Sigmoid colon (tissue), 7 donors: ENCODE measurements at regions of chr10 and their contacts with region 1.

Region 1: GRCh38 chr10:100562008-100562711 is 26.4 kb downstream of the HIF1AN start:
- DNase-seq: peak; percentile 67
- H3K4me3 ChIP-seq: peak overlapping the region in 1 of 4 donors; percentile 7
- H3K27ac ChIP-seq: no peak overlapping the region
- H3K4me1 ChIP-seq: peaks cover 0 to 13% (median 11%) of the 10 kb centered on the region in 4 donors
- H3K27me3 ChIP-seq: peaks cover 19 to 68% (median 54%) of the 10 kb centered on the region in 3 donors
- CTCF ChIP-seq: peak; percentile 39 to 61 (median 50)
- EP300 ChIP-seq: no peak
- POLR2A ChIP-seq: no peak

Region 2: GRCh38 chr10:100338434-100339036 is 223.6 kb before region 1 on chr10:
- intact Hi-C with region 1: no loop called
- DNase-seq: peak; percentile 85
- H3K4me3 ChIP-seq: no peak overlapping the region
- H3K27ac ChIP-seq: no peak overlapping the region
- H3K4me1 ChIP-seq: no peaks in the 10 kb centered on the region
- H3K27me3 ChIP-seq: peaks cover 0 to 6% (median 0%) of the 10 kb centered on the region in 3 donors
- CTCF ChIP-seq: peak; percentile 75 to 92 (median 88)
- EP300 ChIP-seq: no peak
- POLR2A ChIP-seq: no peak

Region 3: GRCh38 chr10:100743626-100744135 is 181.5 kb after region 1 on chr10:
- intact Hi-C with region 1: loop called (anchors 5 kb)
- DNase-seq: peak; percentile 68
- H3K4me3 ChIP-seq: no peak overlapping the region
- H3K27ac ChIP-seq: no peak overlapping the region
- H3K4me1 ChIP-seq: peaks cover 0 to 77% (median 60%) of the 10 kb centered on the region in 4 donors
- H3K27me3 ChIP-seq: peaks cover 87 to 100% (median 97%) of the 10 kb centered on the region in 3 donors
- CTCF ChIP-seq: peak in 2 of 4 experiments; percentile 36 to 37
- EP300 ChIP-seq: no peak
- POLR2A ChIP-seq: no peak